ENCODE measurements at regions of chr4 and their contacts with region 1.

Region 1: DNA sequence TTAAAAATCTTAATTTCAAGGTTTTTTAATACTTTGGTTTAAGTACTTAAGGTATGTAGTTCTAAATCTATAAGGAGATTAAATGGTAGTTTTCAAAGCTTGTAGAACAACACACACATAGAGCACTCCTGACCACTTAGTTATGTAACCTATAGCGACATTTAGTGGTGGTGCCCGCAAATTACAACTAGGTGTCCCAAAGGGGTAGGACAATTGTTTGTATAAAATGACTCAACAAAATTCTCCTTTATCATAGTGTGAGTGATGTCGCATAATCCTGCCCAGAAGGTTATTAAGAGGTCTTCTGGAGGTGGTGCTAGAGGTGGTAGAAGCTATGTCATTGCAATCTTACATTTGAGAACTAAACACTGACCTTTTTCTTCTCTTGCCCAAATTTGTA is 373.0 kb upstream of the RASGEF1B start:
- DNase-seq: peak; percentile 82 to 88
- H3K4me3 ChIP-seq: no peak overlapping the region
- H3K4me3 Mint-ChIP-seq: peak overlapping the region; percentile 13
- H3K27ac Mint-ChIP-seq: peak overlapping the region; percentile 67
- H3K4me1 ChIP-seq: peaks cover 42% of the 10 kb centered on the region
- H3K4me1 Mint-ChIP-seq: peaks cover 31% of the 10 kb centered on the region
- H3K27me3 ChIP-seq: no peaks in the 10 kb centered on the region
- H3K27me3 Mint-ChIP-seq: no peaks in the 10 kb centered on the region
- CTCF ChIP-seq: peak; percentile 64 to 70

Region 2: DNA sequence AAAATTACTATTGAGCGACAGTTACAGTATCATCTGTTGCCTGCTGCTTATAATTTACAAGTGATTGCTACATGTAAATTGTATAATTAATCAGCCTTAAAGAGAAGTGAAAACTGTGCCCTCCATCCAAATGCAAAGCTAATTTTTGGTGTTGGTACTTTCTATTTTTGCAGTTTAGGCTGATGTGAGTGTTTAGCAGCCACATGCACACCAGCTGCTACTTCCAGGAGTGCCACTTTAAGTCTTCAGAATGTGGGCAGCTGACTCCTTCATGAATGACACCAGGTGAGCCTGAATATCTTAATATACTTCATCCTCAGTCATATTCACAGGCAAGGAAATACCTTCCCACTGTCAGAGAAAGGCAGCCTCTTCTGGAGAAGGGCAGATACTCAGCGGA is 223.2 kb before region 1 on chr4:
- CTCF ChIA-PET with region 1: no interaction called
- POLR2A ChIA-PET with region 1: no interaction called
- intact Hi-C with region 1: loop called (anchors 1 kb)
- DNase-seq: no peak
- H3K4me3 ChIP-seq: no peak overlapping the region
- H3K4me3 Mint-ChIP-seq: no peak overlapping the region
- H3K27ac Mint-ChIP-seq: no peak overlapping the region
- H3K4me1 ChIP-seq: no peaks in the 10 kb centered on the region
- H3K4me1 Mint-ChIP-seq: peaks cover 8% of the 10 kb centered on the region
- H3K27me3 ChIP-seq: no peaks in the 10 kb centered on the region
- H3K27me3 Mint-ChIP-seq: no peaks in the 10 kb centered on the region
- CTCF ChIP-seq: no peak

Region 3: GRCh38 chr4:81715757-81716156 is 129.0 kb before region 1 on chr4:
- CTCF ChIA-PET with region 1: no interaction called
- POLR2A ChIA-PET with region 1: no interaction called
- intact Hi-C with region 1: loop called (anchors 2 kb)
- DNase-seq: no peak
- H3K4me3 ChIP-seq: no peak overlapping the region
- H3K4me3 Mint-ChIP-seq: no peak overlapping the region
- H3K27ac Mint-ChIP-seq: no peak overlapping the region
- H3K4me1 ChIP-seq: peaks cover 18% of the 10 kb centered on the region; the same call in 1 of the 2 replicates
- H3K4me1 Mint-ChIP-seq: peaks cover 31% of the 10 kb centered on the region
- H3K27me3 ChIP-seq: no peaks in the 10 kb centered on the region
- H3K27me3 Mint-ChIP-seq: no peaks in the 10 kb centered on the region
- CTCF ChIP-seq: no peak

Region 4: GRCh38 chr4:81771721-81772120 is 73.0 kb before region 1 on chr4:
- CTCF ChIA-PET with region 1: interaction called, 4 read pairs
- POLR2A ChIA-PET with region 1: no interaction called
- intact Hi-C with region 1: loop called (anchors 1 kb)
- DNase-seq: no peak
- H3K4me3 ChIP-seq: no peak overlapping the region
- H3K4me3 Mint-ChIP-seq: no peak overlapping the region
- H3K27ac Mint-ChIP-seq: peak overlapping the region; percentile 94
- H3K4me1 ChIP-seq: peaks cover 27% of the 10 kb centered on the region
- H3K4me1 Mint-ChIP-seq: peaks cover 15% of the 10 kb centered on the region
- H3K27me3 ChIP-seq: no peaks in the 10 kb centered on the region
- H3K27me3 Mint-ChIP-seq: no peaks in the 10 kb centered on the region
- CTCF ChIP-seq: no peak

Region 5: GRCh38 chr4:81919238-81919637 is 74.5 kb after region 1 on chr4:
- CTCF ChIA-PET with region 1: no interaction called
- POLR2A ChIA-PET with region 1: no interaction called
- intact Hi-C with region 1: loop called (anchors 1 kb)
- DNase-seq: peak; percentile 46 to 49
- H3K4me3 ChIP-seq: no peak overlapping the region
- H3K4me3 Mint-ChIP-seq: no peak overlapping the region
- H3K27ac Mint-ChIP-seq: no peak overlapping the region
- H3K4me1 ChIP-seq: peaks cover 5% of the 10 kb centered on the region; the same call in 1 of the 2 replicates
- H3K4me1 Mint-ChIP-seq: peaks cover 13% of the 10 kb centered on the region
- H3K27me3 ChIP-seq: no peaks in the 10 kb centered on the region
- H3K27me3 Mint-ChIP-seq: no peaks in the 10 kb centered on the region
- CTCF ChIP-seq: peak in 1 of 2 experiments; percentile 63

Region 6: DNA sequence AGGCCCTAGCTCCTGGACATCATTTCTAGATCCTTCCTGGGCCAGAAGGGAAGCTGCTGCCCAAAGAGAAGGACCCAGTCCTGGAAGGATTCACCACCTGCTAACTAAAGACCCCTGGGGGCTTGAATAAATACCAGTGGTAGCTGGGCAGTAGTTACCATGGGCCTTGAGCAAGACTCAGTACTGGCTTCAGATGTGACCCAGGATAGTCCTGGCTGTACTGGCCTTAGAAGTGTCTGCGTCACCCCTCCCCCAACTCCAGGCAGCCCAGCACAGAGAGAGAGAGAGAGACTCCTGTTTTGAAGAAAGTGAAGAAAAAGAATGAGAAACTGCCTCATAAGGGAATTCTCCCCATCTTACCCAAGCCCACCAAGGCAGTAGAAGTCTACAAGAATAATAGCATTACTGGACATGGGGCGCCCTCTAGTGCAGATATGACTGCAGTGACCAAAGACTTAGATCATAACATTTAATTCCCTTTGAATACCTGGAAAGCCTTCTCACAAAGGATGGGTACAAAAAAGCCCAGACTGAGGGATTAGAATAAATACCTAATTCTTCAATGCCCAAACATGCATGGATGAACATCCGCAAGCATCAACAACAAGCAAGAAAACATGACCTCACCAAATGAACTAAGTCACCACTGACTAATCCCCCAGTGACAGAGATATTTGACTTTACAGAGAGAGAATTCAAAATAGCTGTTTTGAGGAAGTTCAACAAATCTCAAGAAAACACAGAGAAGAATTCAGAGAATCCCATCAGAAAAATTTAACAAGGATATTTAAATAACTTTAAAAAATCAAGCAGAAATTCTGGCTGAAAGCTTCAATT is 357.3 kb after region 1 on chr4:
- CTCF ChIA-PET with region 1: no interaction called
- POLR2A ChIA-PET with region 1: no interaction called
- intact Hi-C with region 1: loop called (anchors 1 kb)
- DNase-seq: peak; percentile 57 to 63
- H3K4me3 ChIP-seq: no peak overlapping the region
- H3K4me3 Mint-ChIP-seq: no peak overlapping the region
- H3K27ac Mint-ChIP-seq: peak overlapping the region; percentile 51
- H3K4me1 ChIP-seq: no peaks in the 10 kb centered on the region
- H3K4me1 Mint-ChIP-seq: no peaks in the 10 kb centered on the region
- H3K27me3 ChIP-seq: no peaks in the 10 kb centered on the region
- H3K27me3 Mint-ChIP-seq: peaks cover 4% of the 10 kb centered on the region
- CTCF ChIP-seq: peak; percentile 57 to 84

Measured in Caco-2 (cell line).